Activated CD4-positive, alpha-beta T cell treated with anti-CD3 and anti-CD28 coated beads, Interleukin-2, amount 10 ng/mL, durations not matched to agents 24 days and 14 days (primary cell): ENCODE measurements at regions of chr16 and their contacts with region 1.

Region 1: DNA sequence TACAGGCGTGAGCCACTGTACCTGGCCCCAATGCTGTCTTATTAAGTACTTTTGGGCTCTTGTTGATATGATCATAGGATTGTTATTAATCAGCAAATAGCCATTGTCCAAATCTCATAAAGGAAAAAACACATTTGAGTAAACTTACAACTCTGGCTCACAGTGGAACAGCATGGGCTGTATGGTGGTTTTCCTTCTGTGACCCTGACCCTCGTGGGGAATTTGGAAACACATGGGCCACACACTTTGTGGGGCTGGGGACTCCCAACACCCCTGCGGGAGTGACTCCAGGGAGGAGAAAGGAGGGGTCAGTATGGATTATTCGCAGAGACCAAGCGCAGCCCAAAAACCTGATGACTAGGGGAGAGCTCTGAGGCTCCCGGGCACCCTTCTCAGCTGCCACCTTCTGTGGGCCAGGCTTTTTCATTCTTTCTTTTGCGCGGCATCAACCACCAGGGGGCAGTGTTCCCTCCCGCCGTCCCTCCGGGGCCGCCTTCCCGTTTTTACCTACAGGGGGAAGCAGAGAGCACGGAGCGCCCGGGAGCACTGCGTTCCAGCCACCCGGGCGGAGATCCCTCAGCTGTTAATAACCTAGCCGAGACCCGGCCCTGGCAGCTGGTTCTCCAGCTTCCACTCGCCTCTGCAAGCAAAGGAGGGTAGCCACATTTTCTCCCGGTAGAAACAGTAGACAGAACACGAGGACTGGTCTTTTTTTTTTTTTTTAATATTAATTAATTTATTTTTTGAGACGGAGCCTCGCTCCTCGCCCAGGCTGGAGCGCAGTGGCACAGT is 9.7 kb downstream of the TSNAXIP1 start:
- DNase-seq: peak; percentile 98
- H3K4me3 Mint-ChIP-seq: no peak overlapping the region
- H3K27ac Mint-ChIP-seq: peak overlapping the region; percentile 46
- H3K4me1 Mint-ChIP-seq: peaks cover 5% of the 10 kb centered on the region
- H3K27me3 Mint-ChIP-seq: no peaks in the 10 kb centered on the region

Region 2: GRCh38 chr16:66364117-66364967 is 1452.1 kb before region 1 on chr16:
- intact Hi-C with region 1: no loop called
- DNase-seq: no peak
- H3K4me3 Mint-ChIP-seq: no peak overlapping the region
- H3K27ac Mint-ChIP-seq: no peak overlapping the region
- H3K4me1 Mint-ChIP-seq: peaks cover 4% of the 10 kb centered on the region
- H3K27me3 Mint-ChIP-seq: peaks cover 39% of the 10 kb centered on the region

Region 3: GRCh38 chr16:67748834-67749233 is 67.6 kb before region 1 on chr16:
- intact Hi-C with region 1: no loop called
- DNase-seq: no peak
- H3K4me3 Mint-ChIP-seq: no peak overlapping the region
- H3K27ac Mint-ChIP-seq: peak overlapping the region; percentile 8
- H3K4me1 Mint-ChIP-seq: peaks cover 2% of the 10 kb centered on the region
- H3K27me3 Mint-ChIP-seq: no peaks in the 10 kb centered on the region

Region 4: DNA sequence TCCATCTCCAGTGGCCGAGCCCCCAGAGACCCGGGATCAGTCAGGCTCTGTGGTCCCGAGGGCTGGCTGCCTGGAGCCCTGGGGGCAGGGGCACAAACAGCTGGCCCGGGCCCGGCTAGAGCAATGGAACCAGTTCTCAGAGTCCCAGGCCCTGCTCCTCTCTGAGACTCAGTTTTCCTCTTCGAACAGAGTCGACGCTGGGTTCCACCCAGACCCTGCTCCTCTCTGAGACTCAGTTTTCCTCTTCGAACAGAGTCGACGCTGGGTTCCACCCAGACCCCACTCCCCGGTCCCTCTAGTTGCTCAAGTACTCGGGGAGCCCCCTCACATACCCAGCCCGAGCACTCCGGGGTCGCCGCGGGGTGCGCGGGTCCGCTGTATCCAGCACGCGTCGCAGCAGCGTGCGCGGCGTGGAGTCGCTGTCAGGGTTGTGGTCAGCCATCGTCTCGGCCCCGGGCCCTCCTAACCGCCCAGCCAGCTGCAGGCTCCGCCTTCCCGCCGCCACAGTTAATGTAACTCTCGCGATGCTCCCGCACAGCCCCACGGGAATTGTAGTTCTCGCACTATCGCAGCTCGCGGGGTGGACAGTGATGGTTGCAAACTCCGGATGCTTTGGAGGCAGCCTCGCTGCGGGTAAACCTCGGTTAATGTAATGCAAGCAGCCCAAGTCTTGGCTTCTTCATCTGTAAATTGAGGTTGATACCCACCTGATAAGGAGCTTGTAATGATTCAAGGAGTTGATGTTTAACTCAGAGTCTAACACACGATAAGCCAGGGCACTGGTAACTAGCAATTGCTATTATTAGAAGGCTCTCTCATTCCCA is 17.2 kb after region 1 on chr16:
- intact Hi-C with region 1: loop called (anchors 1 kb)
- DNase-seq: peak; percentile 99
- H3K4me3 Mint-ChIP-seq: peak overlapping the region; percentile 98
- H3K27ac Mint-ChIP-seq: peak overlapping the region; percentile 93
- H3K4me1 Mint-ChIP-seq: peaks cover 8% of the 10 kb centered on the region
- H3K27me3 Mint-ChIP-seq: no peaks in the 10 kb centered on the region

Region 5: GRCh38 chr16:67857502-67858233 is 41.2 kb after region 1 on chr16:
- intact Hi-C with region 1: no loop called
- DNase-seq: no peak
- H3K4me3 Mint-ChIP-seq: no peak overlapping the region
- H3K27ac Mint-ChIP-seq: peak overlapping the region; percentile 57
- H3K4me1 Mint-ChIP-seq: peaks cover 27% of the 10 kb centered on the region
- H3K27me3 Mint-ChIP-seq: no peaks in the 10 kb centered on the region

Region 6: DNA sequence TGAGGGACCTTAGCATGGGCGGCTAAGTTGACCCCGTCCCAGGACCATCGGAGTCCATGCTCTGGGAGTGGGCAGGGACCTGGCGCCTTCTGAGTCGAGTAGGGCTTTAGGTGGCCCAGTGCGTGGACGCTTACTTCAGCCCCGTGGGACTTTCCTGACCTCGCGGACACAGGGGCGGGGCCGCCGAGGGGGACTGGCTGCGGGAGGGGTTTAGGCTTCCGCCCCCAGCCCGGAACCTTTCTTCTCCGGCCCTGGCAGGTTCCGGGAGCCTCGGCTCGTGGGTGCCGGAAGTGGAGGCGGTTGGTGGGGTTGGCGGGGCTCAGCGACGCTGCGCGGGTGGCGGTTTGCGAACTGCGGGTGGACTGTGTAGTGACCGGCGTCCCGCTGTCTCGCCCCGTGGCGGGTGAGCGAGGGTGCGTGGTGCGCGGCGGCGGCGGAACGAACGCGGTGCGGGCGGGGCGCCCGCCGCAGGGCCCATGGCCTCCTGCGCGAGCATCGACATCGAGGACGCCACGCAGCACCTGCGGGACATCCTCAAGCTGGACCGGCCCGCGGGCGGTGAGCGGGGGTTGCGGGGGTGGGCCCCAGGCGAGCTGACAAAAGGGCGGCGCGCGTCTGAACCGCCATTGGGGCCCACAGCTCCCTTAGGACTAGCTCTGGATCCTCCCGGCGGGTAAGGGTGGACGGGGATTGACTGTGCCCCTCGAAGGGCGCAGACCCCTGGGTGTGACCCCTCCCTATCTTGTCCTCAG is 56.5 kb after region 1 on chr16 and contains the start of gene EDC4:
- intact Hi-C with region 1: loop called (anchors 2 kb)
- DNase-seq: peak; percentile 98
- H3K4me3 Mint-ChIP-seq: peak within 1 kb of the TSS; percentile 86
- H3K27ac Mint-ChIP-seq: peak within 1 kb of the TSS; percentile 88
- H3K4me1 Mint-ChIP-seq: peaks cover 27% of the 10 kb centered on the region
- H3K27me3 Mint-ChIP-seq: no peaks in the 10 kb centered on the region
- total RNA-seq, gene EDC4: 112 and 122 TPM in 2 replicates

Region 7: GRCh38 chr16:67892899-67893742 is 76.7 kb after region 1 on chr16 and contains the start of gene PSKH1:
- intact Hi-C with region 1: no loop called
- DNase-seq: peak; percentile 97
- H3K4me3 Mint-ChIP-seq: peak within 1 kb of the TSS; percentile 97
- H3K27ac Mint-ChIP-seq: peak within 1 kb of the TSS; percentile 94
- H3K4me1 Mint-ChIP-seq: peaks cover 22% of the 10 kb centered on the region
- H3K27me3 Mint-ChIP-seq: no peaks in the 10 kb centered on the region
- total RNA-seq, gene PSKH1: 14.4 and 16.3 TPM in 2 replicates

Region 8: DNA sequence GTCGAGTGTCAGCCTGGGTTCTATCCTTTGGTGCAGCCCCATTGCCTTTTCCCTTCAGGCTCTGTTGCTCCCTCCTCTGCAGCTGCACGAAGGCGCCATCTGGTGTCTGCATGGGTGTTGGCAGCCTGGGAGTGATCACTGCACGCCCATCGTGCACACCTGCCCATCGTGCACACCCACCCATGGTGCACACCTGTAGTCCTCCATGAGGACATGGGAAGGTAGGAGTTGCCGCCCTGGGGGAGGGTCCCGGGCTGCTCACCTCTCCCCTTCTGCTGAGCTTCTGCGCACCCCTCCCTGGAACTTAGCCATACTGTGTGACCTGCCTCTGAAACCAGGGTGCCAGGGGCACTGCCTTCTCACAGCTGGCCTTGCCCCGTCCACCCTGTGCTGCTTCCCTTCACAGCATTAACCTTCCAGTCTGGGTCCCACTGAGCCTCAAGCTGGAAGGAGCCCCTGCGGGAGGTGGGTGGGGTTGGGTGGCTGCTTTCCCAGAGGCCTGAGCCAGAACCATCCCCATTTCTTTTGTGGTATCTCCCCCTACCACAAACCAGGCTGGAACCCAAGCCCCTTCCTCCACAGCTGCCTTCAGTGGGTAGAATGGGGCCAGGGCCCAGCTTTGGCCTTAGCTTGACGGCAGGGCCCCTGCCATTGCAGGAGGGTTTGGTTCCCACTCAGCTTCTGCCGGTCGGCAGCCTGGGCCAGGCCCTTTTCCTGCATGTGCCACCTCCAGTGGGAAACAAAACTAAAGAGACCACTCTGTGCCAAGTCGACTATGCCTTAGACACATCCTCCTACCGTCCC is 112.3 kb after region 1 on chr16:
- intact Hi-C with region 1: loop called (anchors 1 kb)
- DNase-seq: peak; percentile 93
- H3K4me3 Mint-ChIP-seq: no peak overlapping the region
- H3K27ac Mint-ChIP-seq: peak overlapping the region; percentile 19
- H3K4me1 Mint-ChIP-seq: peaks cover 3% of the 10 kb centered on the region
- H3K27me3 Mint-ChIP-seq: no peaks in the 10 kb centered on the region